HAP-1 (cell line): ENCODE measurements at regions of chr14 and their contacts with region 1.

Region 1: DNA sequence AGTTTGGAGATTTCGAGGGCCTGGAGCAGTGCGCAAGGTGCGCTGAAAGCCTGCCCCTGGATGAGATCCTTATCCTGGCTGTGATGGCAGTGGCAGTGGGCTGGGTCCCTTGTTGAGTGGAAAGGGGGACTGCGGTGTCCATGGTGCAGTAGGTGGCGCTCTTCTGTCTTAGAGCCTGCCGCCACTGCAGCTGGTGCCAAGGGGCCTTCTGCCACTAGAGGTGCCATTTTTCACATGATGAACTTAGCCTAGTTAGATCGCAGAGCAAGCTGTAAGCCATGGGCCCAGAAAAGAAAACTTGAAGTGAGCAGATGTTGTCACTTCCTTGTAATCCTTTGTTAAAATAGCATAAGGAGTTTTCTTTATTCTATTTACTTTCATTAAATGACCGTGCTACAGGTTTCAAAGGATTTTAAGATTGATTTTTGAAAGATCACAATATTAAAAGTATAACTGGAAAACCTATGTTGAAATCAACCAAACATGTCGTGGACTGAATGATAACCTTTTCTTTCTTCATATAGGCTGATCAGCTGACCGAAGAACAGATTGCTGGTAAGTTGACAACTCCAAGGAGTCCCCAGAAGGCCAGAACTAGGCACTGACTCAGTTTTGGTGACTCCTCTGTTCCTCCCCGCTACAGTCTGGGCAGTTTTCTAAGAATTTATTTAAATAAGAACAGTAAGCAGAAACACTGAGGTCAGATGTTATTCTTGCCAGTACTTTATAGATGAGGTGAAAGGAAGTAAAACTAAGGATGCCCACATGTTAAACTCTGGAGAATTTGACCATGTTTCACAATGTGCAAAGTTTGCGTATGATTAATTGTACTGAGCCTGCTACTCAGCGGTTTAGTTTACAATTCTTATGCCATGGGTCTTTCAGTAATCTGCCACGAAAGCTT is 3.0 kb downstream of the CALM1 start:
- DNase-seq: peak; percentile 91 to 94
- H3K4me3 ChIP-seq: no peak overlapping the region; the same call in 1 of the 2 replicates
- H3K4me1 ChIP-seq: peaks cover 12% of the 10 kb centered on the region
- H3K27me3 ChIP-seq: no peaks in the 10 kb centered on the region

Region 2: DNA sequence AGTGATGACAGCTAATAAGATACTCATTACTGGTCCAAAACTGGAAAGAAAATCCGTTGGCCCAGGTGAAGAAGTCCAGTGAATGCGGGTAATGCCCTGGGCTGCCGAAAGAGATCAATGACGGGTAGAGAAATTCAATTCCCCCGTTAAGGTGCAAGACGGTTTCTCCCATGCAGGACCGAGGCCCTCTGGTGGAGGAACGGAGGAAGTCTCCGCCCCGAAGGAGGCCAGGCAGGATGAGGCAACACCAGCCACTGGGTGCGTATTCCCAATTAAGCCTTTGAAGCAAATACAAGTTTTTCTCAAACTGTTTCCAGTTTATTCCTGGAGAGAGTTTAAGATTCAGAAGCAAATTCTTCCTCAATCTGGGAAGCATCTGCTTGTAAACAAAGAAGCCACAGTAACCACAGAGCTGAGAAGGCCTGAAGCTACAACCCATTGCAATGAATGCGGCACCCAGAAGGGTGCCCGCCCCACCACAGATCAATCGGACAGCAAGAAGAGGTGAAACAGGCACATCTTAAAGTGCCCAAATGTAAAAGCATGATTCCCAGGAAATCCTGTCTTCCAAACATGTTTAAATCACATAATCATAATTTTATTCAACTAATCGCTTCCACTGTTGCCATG is 297.9 kb after region 1 on chr14:
- in situ Hi-C with region 1: loop called (anchors 25 kb)
- DNase-seq: peak; percentile 65 to 86
- H3K4me3 ChIP-seq: no peak overlapping the region
- H3K4me1 ChIP-seq: no peaks in the 10 kb centered on the region
- H3K27me3 ChIP-seq: no peaks in the 10 kb centered on the region